ENCODE measurements at regions of chr19 and their contacts with region 1.

Region 1: DNA sequence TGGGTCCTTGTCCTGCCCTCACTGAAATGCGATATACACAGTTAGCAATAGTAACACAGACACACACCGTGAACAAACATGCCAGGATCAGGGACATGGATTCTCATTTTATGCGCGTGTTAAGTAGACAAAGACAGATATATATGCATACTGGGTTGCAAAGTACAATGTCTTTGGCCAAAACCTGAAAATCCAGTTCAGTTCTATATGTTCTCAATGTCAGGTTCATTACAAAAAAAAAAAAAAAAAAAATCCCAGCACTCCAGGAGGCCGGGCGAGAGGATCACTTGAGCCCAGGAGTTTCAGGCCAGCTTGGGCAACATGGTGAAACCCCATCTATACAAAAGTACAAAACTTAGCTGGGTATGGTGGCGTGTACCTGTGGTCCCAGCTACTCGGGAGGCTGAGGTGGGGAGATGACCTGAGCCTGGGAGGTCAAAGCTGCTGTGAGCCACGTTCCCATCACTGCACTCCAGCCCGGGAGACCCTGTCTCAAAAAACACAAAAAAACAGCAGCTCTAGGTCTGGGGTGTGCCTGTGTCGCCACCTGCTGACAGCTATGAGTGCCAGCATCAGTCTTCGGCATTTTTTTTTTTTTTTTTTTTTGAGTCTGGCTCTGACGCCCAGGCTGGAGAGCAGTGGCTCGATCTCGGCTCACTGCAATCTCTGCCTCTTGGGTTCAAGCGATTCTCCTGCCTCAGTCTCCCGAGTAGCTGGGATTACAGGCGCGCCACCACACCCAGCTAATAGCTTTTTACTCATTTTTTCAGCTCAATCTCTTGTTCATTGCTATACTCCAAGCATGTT is 10.3 kb downstream of the AP2S1 start:
- DNase-seq: no peak
- H3K4me3 ChIP-seq: no peak overlapping the region
- H3K27ac ChIP-seq: peak overlapping the region; percentile 78 to 86
- H3K4me1 ChIP-seq: peaks cover 0 to 42% (median 23%) of the 10 kb centered on the region in 4 donors
- H3K27me3 ChIP-seq: no peaks in the 10 kb centered on the region
- CTCF ChIP-seq: peak; percentile 76 to 90

Region 2: DNA sequence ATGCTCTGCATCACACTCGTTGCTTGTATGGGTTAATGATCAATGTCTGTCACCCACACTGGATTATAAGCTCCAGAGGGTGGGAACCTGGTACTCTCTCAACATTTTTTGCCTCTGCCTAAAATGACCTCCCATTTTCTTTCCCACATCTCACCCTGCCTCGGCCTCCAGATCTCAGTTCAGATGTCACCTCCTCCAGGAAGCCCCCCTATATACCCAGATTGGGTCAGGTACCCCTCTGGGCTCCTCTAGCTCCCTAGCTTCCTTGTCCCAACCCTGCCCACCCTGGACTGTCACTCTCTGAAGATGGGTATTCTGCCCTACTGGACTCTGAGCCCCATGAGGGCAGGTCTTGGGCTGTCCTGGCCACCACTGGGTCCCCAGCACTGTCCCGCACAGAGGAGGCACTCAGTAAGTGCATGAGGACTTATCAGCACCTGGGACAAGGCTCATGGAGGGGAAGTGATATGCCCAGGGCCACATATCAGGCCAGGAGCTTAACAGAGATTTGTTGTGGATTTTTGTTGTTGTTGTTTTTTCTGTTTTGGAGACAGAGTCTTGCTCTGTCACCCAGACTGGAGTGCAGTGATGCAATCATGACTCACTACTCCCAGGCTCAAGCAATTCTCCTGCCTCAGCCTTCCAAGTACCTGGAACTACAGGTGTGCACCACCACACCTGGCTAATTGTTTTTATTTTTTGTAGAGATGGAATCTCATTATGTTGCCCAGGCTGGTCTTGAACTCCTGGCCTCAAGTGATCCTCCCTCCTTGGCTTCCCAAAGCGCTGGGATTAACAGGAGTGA is 147.2 kb before region 1 on chr19:
- intact Hi-C with region 1: no loop called
- DNase-seq: no peak
- H3K4me3 ChIP-seq: no peak overlapping the region
- H3K27ac ChIP-seq: no peak overlapping the region
- H3K4me1 ChIP-seq: peaks cover 0 to 13% (median 5%) of the 10 kb centered on the region in 4 donors
- H3K27me3 ChIP-seq: no peaks in the 10 kb centered on the region
- CTCF ChIP-seq: no peak

Region 3: GRCh38 chr19:46704379-46705076 is 135.8 kb before region 1 on chr19:
- intact Hi-C with region 1: loop called (anchors 5 kb)
- DNase-seq: peak; percentile 71 to 83
- H3K4me3 ChIP-seq: no peak overlapping the region
- H3K27ac ChIP-seq: no peak overlapping the region
- H3K4me1 ChIP-seq: no peaks in the 10 kb centered on the region
- H3K27me3 ChIP-seq: no peaks in the 10 kb centered on the region
- CTCF ChIP-seq: peak; percentile 90 to 94

Region 4: GRCh38 chr19:46753420-46754155 is 86.8 kb before region 1 on chr19:
- intact Hi-C with region 1: loop called (anchors 1 kb)
- DNase-seq: peak in 1 of 2 donors; percentile 46
- H3K4me3 ChIP-seq: no peak overlapping the region
- H3K27ac ChIP-seq: peak overlapping the region; percentile 15 to 83
- H3K4me1 ChIP-seq: peaks cover 0 to 30% (median 12%) of the 10 kb centered on the region in 4 donors
- H3K27me3 ChIP-seq: no peaks in the 10 kb centered on the region
- CTCF ChIP-seq: peak in 1 of 2 experiments; percentile 15

Measured in tibial artery (tissue), 4 donors.